Right ventricle myocardium inferior (tissue), 1 donor: ENCODE measurements at regions of chr21 and their contacts with region 1.

Region 1: GRCh38 chr21:32257962-32258785 is 20.7 kb downstream of the MIS18A start:
- DNase-seq: no peak
- ATAC-seq: peak; percentile 86

Region 2: DNA sequence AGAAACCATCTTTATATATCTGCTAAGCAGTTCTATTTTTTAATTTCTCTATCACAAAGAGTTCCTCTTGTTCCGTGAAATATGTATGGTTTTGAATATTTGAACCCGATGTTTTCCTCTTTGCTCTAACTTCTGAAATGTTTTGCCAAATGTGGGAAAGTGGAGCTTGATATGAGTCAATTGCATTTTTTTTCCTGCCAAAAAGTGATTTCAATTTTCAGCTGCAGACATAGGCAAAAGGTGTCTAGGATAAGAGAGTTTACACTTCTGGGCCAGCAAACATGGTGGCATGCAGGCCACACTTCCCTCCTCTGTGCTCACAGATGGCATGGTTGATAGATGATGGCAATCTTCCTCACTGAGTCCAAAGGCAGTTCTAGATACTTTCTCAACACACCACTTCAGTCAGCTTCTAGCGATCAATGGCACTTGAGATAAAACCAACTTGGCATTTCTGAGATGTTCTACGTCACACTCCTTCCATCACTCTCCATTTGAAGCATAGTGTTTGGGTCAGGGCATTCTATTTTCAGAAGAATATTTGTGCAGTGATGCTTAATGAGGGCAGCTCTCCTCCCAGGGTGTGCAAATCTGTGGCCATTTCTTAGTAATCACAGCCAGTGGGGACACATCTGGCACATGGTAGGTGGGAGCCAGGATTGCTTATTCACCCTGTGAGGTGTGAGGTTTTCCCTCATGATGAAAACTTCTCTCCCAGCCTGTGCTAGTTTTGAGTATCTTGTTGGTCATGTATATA is 471.8 kb before region 1 on chr21:
- intact Hi-C with region 1: loop called (anchors 1 kb)
- DNase-seq: no peak
- ATAC-seq: no peak

Region 3: DNA sequence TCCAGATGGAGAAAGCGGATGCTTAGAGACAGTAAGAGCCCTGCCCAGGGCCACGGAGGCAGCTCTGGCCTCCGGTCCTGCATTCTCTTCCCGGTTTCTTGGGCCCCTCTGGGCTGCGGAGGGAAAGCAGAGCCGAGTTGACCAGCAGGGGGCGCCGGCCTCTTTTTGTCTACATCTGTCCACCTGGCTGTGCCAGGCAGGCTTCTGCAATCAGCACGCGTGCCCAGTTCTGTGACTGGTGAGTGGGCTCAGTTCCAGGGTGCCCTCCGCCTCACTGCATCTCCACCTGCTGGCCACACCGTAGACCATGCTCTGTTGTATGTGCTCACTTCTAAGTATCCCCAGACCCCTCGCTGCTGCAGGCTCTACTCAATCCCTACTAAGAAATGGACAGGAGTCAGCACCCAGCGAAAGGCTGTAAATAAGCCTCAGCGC is 392.1 kb before region 1 on chr21:
- intact Hi-C with region 1: loop called (anchors 1 kb)
- DNase-seq: peak; percentile 89
- ATAC-seq: peak; percentile 87

Region 4: DNA sequence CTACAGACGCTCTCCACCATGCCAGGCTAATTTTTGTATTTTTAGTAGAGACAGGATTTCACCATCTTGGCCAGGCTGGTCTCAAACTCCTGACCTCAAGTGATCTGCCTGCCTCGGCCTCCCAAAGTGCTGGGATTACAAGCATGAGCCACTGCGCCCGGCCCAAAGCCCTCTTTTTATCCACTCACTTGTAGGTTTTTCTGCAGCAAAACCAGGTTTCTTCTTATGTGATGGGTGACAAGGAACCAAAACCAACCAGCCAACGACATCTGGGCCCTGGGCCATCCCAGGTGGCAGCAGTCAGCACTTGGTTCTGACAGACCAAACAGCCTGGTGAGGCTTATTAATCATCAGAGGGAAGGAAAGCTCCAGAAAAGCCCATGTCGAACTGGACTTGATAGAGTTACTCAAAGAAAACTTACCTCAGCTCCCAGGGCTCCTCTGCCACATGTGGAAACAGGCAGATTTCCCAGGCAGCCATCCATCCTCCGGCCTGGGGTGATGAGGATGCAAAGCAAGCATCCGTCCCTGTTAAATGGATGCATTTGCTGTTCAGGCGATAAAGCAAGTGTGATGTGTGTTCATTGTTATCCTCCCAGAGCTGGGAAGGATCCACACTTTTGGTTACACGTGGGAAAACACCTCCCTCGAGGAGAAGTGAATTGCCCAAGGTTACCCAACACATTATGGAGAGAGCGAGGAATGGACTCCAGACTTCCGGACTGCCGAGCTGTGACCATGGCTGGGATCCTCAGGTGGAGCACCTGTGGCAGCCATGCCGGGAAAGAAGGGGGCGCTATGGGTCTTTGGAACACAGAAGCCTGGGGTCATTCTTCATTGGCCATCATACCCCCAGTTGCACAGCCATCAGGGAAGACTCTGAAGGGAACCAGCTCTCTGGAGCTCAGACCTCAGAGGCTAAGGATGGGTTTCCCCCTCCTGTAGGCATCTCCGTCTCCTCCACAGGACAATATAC is 266.5 kb before region 1 on chr21:
- intact Hi-C with region 1: loop called (anchors 5 kb)
- DNase-seq: no peak
- ATAC-seq: no peak

Region 5: GRCh38 chr21:32099812-32100416 is 158.3 kb before region 1 on chr21:
- intact Hi-C with region 1: loop called (anchors 10 kb)
- DNase-seq: no peak
- ATAC-seq: no peak